Psoas muscle (tissue), 8 donors: ENCODE measurements at regions of chr4 and their contacts with region 1.

Region 1: DNA sequence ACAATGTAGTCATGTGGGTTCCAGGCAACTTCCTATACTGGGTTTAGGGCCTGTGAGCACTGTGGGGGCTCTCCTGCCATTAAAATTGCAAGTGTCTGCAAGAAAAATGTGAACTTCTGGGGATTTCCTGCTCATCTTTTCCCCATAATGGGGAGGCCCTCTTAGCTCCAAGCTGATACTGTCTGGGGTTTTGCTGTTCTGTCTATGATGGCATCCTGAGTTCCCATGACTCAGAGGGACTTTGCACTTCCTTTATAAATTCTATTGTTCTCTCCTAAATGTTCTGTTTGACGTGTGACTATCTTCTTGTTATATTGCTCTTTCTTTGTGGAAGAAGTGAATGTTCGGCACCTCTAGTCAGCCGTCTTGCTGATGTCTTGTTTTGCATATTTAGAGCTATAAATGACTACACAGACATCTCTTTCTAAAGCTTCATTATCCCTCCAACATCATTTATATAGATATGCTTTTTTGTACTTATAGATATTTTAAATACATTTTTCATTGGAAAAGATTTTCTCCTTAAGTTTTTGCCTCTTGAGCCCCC is 465.8 kb downstream of the NAF1 start:
- DNase-seq: no peak
- ATAC-seq: no peak
- H3K4me3 ChIP-seq: no peak overlapping the region
- H3K27ac ChIP-seq: no peak overlapping the region
- H3K4me1 ChIP-seq: peaks cover 10% of the 10 kb centered on the region
- H3K27me3 ChIP-seq: no peaks in the 10 kb centered on the region
- CTCF ChIP-seq: no peak

Region 2: DNA sequence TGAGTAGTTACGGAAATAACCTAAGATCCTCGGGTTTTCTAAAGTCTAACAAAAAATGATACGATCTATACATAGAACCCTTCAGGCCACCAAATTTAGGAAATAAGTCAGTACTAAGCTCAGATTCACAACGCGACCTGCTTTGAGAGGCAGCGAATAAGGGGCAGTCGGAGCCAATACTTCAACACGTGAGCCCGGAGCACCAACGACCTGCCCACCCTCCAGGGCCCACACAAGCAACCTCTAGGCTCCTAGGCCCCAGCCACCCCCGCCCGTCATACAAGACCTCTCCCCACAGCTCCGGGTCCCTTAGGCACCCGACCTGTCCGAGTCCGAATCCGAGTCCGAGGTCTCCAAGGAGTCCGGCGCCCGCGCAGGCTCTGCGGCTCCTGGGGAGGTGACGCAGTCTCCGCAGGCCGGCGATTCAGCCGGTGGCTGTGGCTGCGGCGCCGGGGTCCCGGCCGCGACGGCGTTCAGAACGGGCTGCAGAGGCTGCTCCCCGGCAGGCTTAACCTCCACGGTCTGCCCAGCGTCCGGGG is 465.2 kb after region 1 on chr4:
- intact Hi-C with region 1: loop called in 1 of 2 experiments (anchors 10 kb)
- DNase-seq: peak; percentile 53 to 70
- ATAC-seq: peak; percentile 67 to 79 (median 74)
- H3K4me3 ChIP-seq: peak overlapping the region; percentile 94
- H3K27ac ChIP-seq: peak overlapping the region; percentile 94
- H3K4me1 ChIP-seq: peaks cover 23% of the 10 kb centered on the region
- H3K27me3 ChIP-seq: no peaks in the 10 kb centered on the region
- CTCF ChIP-seq: no peak